Head of caudate nucleus (tissue), 42 donors: ENCODE measurements at regions of chr2 and their contacts with region 1.

Region 1: GRCh38 chr2:217756375-217757107 is 246.3 kb downstream of the TNS1 start:
- DNase-seq: peak; percentile 64 to 95 (median 87)

Region 2: GRCh38 chr2:217650716-217651360 is 105.7 kb before region 1 on chr2:
- intact Hi-C with region 1: loop called (anchors 2 kb)
- DNase-seq: peak in 33 of 42 donors; percentile 3 to 81 (median 53)